ENCODE measurements at regions of chr5 and their contacts with region 1.

Region 1: DNA sequence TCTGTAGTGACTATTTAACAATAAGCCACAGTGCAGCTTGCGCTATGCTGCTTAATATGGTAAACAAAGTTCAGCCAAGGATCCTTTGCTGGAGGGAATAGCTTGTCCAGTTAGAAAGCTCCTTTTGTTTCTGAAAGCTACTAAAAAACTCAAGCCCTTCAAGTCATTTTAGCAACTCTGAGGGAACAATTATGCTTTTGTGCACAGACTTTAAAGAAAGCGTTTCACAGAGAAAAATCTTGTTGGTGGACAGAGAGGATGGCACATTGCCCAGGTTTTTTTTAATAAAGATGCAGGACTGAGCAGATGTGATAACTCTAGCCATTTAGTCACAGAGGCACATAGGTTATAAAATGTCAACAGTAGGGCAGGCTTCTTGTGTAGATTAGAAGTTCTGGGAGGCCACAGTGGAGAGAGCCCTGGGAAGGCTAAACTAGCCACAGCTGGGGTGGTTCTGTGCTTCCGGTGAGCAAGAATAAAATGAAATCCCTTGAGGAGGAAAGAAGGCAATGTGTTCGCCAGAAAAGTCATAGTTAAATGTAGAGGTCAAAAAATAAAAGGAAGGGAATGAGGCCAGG is 63.4 kb downstream of the ALDH7A1 start:
- DNase-seq: no peak
- ATAC-seq: peak; percentile 50 to 90

Region 2: DNA sequence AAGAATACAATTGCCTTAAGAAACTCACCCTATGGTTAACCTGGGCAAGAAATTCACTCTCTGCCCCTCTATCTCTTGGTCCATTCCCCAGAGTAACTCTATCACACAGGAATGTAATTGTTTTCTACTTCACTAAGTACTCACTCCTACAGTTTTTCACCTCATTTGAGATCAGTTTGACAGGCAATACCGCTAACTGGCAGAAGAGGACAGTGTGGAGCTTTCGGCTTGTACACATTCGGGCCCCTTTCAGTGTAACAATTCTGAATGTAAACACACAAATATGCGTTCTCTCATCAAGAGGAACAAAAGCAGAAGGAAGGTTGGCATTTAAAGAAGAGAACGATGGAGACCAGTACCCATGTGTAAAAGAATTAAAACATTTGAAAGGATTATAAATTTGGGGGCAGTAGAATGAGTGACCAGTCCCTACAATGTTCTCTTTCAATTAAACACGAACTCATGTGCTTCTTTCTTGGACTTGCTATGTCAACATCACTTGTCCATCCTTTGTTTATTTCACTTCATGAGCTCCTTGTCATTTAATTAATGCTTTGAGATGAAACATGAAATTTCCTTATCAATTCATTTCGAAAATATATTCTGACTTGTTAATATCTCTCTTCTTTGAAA is 297.0 kb before region 1 on chr5:
- intact Hi-C with region 1: loop called in 1 of 2 experiments (anchors 10 kb)
- DNase-seq: no peak
- ATAC-seq: no peak

Measured in left cardiac atrium (tissue), 4 donors.